ENCODE measurements at regions of chr2 and their contacts with region 1.

Region 1: GRCh38 chr2:174771631-174772471 is 7.6 kb upstream of the CHRNA1 start:
- DNase-seq: peak; percentile 77
- H3K4me3 Mint-ChIP-seq: no peak overlapping the region
- H3K27ac Mint-ChIP-seq: no peak overlapping the region
- H3K4me1 Mint-ChIP-seq: no peaks in the 10 kb centered on the region
- H3K27me3 Mint-ChIP-seq: no peaks in the 10 kb centered on the region
- CTCF ChIP-seq: peak; percentile 65

Region 2: GRCh38 chr2:174748948-174749347 is 22.9 kb before region 1 on chr2:
- CTCF ChIA-PET with region 1: interaction called, 14 read pairs
- intact Hi-C with region 1: no loop called
- DNase-seq: peak; percentile 86
- H3K4me3 Mint-ChIP-seq: no peak overlapping the region
- H3K27ac Mint-ChIP-seq: no peak overlapping the region
- H3K4me1 Mint-ChIP-seq: no peaks in the 10 kb centered on the region
- H3K27me3 Mint-ChIP-seq: peaks cover 22% of the 10 kb centered on the region
- CTCF ChIP-seq: peak; percentile 74

Region 3: GRCh38 chr2:174827371-174828369 is 55.8 kb after region 1 on chr2:
- CTCF ChIA-PET with region 1: no interaction called
- intact Hi-C with region 1: no loop called
- DNase-seq: peak; percentile 29
- H3K4me3 Mint-ChIP-seq: peak overlapping the region; percentile 39
- H3K27ac Mint-ChIP-seq: peak overlapping the region; percentile 57
- H3K4me1 Mint-ChIP-seq: peaks cover 14% of the 10 kb centered on the region
- H3K27me3 Mint-ChIP-seq: no peaks in the 10 kb centered on the region
- CTCF ChIP-seq: no peak

Region 4: GRCh38 chr2:174985630-174986029 is 213.8 kb after region 1 on chr2:
- CTCF ChIA-PET with region 1: interaction called, 23 read pairs
- intact Hi-C with region 1: loop called (anchors 1 kb)
- DNase-seq: no peak
- H3K4me3 Mint-ChIP-seq: no peak overlapping the region
- H3K27ac Mint-ChIP-seq: no peak overlapping the region
- H3K4me1 Mint-ChIP-seq: no peaks in the 10 kb centered on the region
- H3K27me3 Mint-ChIP-seq: no peaks in the 10 kb centered on the region
- CTCF ChIP-seq: no peak

Measured in Calu3 (cell line).